ENCODE measurements at regions of chr2 and their contacts with region 1.

Region 1: DNA sequence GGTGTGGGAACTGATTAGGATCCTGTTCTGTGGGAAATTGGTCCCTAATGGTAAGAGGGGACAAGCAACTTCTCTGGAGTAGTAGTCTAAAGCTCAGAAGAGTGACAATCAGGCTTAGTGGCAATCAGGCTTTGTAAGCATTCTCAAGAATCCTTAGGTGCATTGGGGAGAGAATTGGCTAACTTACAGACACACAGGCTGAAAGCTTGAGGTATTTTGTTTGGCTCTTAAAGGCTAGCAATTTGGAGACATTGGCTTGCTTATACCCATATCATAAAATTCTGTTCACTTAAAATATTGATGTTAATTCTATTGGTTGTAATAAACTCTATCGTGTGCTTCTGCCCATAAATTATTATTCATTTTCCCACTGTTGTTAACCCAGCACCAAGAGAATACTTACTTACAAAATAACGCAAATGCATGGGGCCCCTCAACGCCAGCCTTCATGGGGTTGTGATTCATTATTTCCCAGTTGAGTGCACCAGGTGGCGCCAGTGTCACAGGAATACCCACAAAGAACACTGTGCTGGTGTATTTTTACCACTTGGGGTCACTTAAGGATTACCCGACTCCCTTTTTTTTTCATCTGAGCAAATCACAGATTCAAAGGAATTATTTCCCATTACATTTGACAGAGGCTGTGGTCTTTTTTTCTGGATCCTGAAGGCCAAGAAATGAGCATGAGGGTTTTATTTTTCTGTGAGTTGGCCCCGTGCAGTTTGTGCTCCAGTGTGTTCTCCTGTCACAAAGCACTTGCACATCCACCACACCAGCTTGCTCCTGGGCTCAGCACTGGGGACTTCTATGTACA is 45.5 kb downstream of the DDX1 start:
- DNase-seq: peak; percentile 81
- H3K4me3 Mint-ChIP-seq: no peak overlapping the region
- H3K27ac Mint-ChIP-seq: no peak overlapping the region
- H3K4me1 Mint-ChIP-seq: peaks cover 6% of the 10 kb centered on the region
- H3K27me3 Mint-ChIP-seq: no peaks in the 10 kb centered on the region

Region 2: GRCh38 chr2:15748736-15749323 is 111.7 kb after region 1 on chr2:
- CTCF ChIA-PET with region 1: no interaction called
- intact Hi-C with region 1: loop called (anchors 1 kb)
- DNase-seq: peak; percentile 31
- H3K4me3 Mint-ChIP-seq: no peak overlapping the region
- H3K27ac Mint-ChIP-seq: no peak overlapping the region
- H3K4me1 Mint-ChIP-seq: no peaks in the 10 kb centered on the region
- H3K27me3 Mint-ChIP-seq: peaks cover 2% of the 10 kb centered on the region

Region 3: GRCh38 chr2:15799432-15799827 is 162.3 kb after region 1 on chr2:
- CTCF ChIA-PET with region 1: interaction called, 3 read pairs
- intact Hi-C with region 1: loop called (anchors 5 kb)
- DNase-seq: no peak
- H3K4me3 Mint-ChIP-seq: no peak overlapping the region
- H3K27ac Mint-ChIP-seq: no peak overlapping the region
- H3K4me1 Mint-ChIP-seq: no peaks in the 10 kb centered on the region
- H3K27me3 Mint-ChIP-seq: peaks cover 5% of the 10 kb centered on the region

Region 4: GRCh38 chr2:16201848-16202247 is 564.7 kb after region 1 on chr2:
- CTCF ChIA-PET with region 1: no interaction called
- intact Hi-C with region 1: no loop called
- DNase-seq: no peak
- H3K4me3 Mint-ChIP-seq: no peak overlapping the region
- H3K27ac Mint-ChIP-seq: no peak overlapping the region
- H3K4me1 Mint-ChIP-seq: no peaks in the 10 kb centered on the region
- H3K27me3 Mint-ChIP-seq: no peaks in the 10 kb centered on the region

Region 5: DNA sequence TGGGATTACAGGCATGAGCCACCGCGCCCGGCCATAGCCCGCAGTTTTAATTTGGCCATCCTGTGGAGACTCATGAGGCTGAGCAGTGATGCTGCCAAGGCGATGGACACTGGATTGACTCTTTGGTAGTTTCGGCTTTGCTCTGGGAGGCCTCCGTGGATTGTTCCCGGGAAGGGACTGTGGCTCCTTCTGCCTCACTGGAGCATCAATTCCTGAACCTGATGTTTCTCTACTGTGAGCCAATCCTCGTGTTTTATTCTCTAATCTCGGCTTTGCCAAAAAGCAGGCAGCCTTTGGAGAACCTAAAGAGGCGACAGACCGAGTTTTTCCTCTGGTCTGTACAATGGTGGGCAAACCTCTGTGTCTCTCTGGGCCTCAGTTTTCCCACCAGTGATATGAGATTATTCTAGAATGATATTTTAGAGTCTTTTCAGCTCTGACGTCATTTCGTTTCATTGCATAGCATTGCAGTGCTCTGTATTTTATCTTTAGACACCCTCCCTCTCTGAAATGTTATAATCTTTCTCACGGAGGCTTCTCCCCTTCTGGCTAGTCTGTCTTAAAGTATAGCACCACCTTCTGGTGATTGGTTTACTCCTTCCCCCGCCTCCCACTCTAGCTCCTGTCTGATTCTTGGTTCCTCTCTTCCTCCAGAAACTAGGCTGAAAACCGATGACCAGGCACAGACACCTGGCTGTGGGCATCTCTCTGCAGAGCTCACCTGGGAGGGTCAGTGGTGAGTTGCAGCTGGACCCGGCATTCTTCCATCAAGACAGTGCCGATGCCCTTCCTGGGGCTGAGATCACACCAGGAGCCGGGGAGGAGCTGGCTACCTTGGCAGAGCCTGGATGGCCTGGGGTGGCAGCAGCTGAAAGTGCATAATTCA is 644.5 kb after region 1 on chr2:
- CTCF ChIA-PET with region 1: interaction called, 3 read pairs
- intact Hi-C with region 1: loop called (anchors 1 kb)
- DNase-seq: peak; percentile 16
- H3K4me3 Mint-ChIP-seq: no peak overlapping the region
- H3K27ac Mint-ChIP-seq: no peak overlapping the region
- H3K4me1 Mint-ChIP-seq: no peaks in the 10 kb centered on the region
- H3K27me3 Mint-ChIP-seq: peaks cover 2% of the 10 kb centered on the region

Region 6: GRCh38 chr2:16507655-16508489 is 870.7 kb after region 1 on chr2:
- CTCF ChIA-PET with region 1: no interaction called
- intact Hi-C with region 1: loop called (anchors 1 kb)
- DNase-seq: peak; percentile 34
- H3K4me3 Mint-ChIP-seq: no peak overlapping the region
- H3K27ac Mint-ChIP-seq: no peak overlapping the region
- H3K4me1 Mint-ChIP-seq: no peaks in the 10 kb centered on the region
- H3K27me3 Mint-ChIP-seq: peaks cover 58% of the 10 kb centered on the region

Region 7: DNA sequence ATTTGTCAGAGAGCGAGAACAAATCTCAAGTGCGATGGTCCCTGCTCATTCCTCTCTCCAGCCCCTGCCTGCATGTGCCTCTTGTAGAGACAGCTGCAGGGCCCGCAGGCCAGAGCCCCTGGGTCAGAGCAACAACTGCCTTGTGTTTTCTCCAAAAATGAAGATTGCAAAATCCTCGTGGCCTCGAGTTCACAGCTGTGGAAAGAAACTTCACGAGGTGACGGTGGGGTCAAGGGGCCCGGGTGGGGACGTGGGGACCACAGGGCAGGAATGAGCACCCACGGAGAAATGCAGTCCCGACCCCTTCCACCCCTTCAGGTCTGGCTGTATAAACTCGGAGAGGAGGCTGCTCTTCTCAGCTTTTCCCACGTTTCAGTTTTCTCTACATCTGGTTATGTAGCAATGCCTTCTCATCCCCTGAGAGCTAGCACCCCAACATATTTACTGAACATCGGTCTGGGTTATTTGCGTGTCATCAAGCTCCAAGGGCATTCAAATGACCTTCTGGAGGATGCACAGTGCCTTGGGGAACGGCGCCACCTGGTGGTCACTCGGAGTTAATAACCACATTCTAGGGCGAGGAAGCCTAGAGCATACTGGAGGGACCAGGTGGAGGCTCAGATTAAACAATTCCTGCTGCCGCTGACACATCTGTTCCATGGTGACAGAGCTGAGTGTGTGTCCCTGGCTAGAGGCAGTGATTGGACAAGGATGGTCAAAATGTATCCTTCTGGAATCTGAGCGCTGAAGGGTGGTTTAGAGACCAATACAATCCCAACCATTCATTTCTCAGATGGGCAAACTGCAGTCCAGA is 1119.9 kb after region 1 on chr2:
- CTCF ChIA-PET with region 1: no interaction called
- intact Hi-C with region 1: loop called (anchors 5 kb)
- DNase-seq: peak; percentile 73
- H3K4me3 Mint-ChIP-seq: no peak overlapping the region
- H3K27ac Mint-ChIP-seq: no peak overlapping the region
- H3K4me1 Mint-ChIP-seq: no peaks in the 10 kb centered on the region
- H3K27me3 Mint-ChIP-seq: peaks cover 8% of the 10 kb centered on the region